ENCODE measurements at regions of chr3 and their contacts with region 1.

Region 1: DNA sequence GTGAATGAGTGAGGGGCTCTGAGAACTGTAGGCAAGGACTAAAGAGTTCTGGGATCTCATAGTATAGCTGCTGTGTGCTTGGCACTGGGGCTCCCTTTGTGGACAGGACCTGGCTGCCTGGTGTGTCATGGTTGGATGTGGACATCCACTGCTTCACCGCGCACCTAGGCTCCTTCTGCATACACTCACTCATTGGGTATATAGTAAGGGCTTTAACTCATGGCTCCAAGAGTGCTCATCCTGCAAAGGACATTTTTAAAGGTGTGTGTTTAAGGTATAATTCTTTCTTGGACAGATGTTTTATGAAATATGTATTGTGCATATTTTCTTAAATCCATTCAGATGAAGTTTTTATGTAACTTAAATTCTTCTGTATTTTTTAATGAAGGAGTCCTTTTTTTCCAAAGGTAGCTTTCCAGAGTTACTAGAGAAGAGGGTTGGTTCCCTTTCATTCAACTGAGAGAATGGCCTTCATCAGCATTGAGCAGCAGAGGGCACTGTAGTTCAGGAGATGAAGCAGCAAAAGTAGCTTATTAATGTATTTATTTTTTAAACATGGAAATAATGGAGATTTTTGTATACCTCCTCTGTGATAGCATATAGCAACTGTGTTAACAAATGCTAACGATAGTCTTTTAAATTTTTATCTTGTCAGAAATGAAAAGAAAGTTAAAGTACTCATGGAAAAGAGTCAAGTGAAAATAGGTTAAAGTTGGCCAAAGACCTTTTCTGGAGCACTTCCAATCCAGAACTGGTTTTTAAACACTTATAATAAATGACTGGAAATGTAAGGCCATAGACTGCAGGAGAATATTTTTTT is 25.2 kb downstream of the OXNAD1 start:
- DNase-seq: peak in 8 of 10 donors; percentile 54 to 74 (median 61)
- ATAC-seq: peak in 1 of 2 donors; percentile 11
- H3K4me3 Mint-ChIP-seq: peak overlapping the region; percentile 95 to 100 (median 97)
- H3K27ac Mint-ChIP-seq: peak overlapping the region; percentile 93 to 99 (median 96)
- H3K4me1 Mint-ChIP-seq: peaks cover 29 to 88% (median 59%) of the 10 kb centered on the region in 4 donors
- H3K27me3 Mint-ChIP-seq: no peaks in the 10 kb centered on the region

Region 2: DNA sequence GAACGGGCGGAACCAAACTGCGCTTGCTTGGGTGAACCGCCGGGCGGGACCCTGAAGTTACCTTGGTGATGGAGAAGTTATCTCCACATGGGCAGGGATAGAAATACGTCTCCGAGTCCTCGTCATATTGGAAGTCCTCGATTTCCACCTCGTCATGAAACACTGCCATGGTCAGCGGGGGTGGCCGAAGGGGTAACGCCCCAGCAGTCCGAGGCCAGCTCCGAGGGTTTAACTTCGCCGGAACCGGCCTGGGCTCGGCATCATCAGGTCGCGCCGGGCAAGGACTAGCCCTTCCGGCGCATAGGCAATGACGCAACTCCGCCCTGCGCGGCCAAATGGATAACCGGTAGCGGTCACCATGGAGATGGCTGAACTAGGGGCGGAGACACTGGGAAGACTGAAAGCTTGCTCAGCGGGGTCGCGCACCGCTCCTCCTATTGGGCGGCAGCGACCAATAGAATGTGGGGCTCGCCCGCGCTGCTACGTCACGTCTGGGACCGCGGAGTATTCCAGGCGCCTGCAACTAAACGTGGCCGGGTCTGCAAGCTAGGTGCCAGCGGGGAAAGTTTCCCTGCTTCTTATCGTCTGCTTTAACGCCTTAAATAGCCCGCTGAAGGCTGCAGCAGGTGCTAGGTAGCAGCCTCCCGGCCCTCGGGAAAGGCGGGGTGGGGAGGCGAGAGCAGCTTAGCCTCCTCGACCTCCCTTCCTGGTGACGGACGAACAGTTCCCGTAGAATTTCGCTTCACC is 25.3 kb before region 1 on chr3 and contains the starts of genes DPH3 and OXNAD1:
- POLR2A ChIA-PET with region 1: interaction called, 20 read pairs
- DNase-seq: peak; percentile 95 to 100 (median 99)
- ATAC-seq: peak; percentile 93
- H3K4me3 Mint-ChIP-seq: peak within 1 kb of the TSS; percentile 90 to 100 (median 100)
- H3K27ac Mint-ChIP-seq: peak within 1 kb of the TSS; percentile 96 to 100 (median 99)
- H3K4me1 Mint-ChIP-seq: peaks cover 16 to 38% (median 30%) of the 10 kb centered on the region in 4 donors
- H3K27me3 Mint-ChIP-seq: peaks cover 0 to 3% (median 0%) of the 10 kb centered on the region in 5 donors
- polyA plus RNA-seq, gene DPH3: 16.7 to 20.9 (median 18.6) TPM
- polyA plus RNA-seq, gene OXNAD1: 106 to 190 (median 168) TPM

Region 3: DNA sequence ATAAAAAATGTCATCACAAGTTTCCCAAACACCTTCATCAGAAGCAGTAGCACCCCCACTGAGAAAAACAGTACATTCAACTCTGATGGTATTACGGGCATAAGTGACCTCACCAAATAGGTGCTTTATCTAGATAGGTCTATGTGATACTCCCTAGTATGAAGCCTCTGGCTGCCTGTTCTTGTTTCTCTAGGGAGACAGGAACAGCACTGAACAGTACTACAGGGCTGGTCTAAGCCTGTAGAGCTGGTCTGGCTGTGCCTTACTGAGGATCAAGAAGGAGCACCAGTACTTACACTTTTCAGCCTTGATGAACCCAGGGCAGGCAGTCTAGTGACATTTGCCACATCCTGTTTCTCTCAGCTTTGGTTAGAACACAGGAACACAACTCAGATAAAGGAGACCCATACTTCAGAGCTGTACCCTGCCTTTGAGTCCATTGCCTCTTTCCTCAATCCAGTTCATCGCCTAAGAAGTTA is 10.7 kb after region 1 on chr3:
- POLR2A ChIA-PET with region 1: interaction called, 186 read pairs
- DNase-seq: peak in 9 of 10 donors; percentile 49 to 87 (median 75)
- ATAC-seq: peak; percentile 68 to 82
- H3K4me3 Mint-ChIP-seq: peak overlapping the region; percentile 84 to 100 (median 93)
- H3K27ac Mint-ChIP-seq: peak overlapping the region; percentile 86 to 99 (median 96)
- H3K4me1 Mint-ChIP-seq: peaks cover 52 to 99% (median 96%) of the 10 kb centered on the region in 4 donors
- H3K27me3 Mint-ChIP-seq: no peaks in the 10 kb centered on the region

Region 4: GRCh38 chr3:16309558-16309957 is 19.3 kb after region 1 on chr3:
- POLR2A ChIA-PET with region 1: interaction called, 304 read pairs
- DNase-seq: peak in 7 of 10 donors; percentile 52 to 78 (median 66)
- ATAC-seq: peak; percentile 68 to 72
- H3K4me3 Mint-ChIP-seq: peak overlapping the region; percentile 51 to 100 (median 76)
- H3K27ac Mint-ChIP-seq: peak overlapping the region; percentile 23 to 99 (median 91)
- H3K4me1 Mint-ChIP-seq: peaks cover 44 to 91% (median 87%) of the 10 kb centered on the region in 4 donors
- H3K27me3 Mint-ChIP-seq: no peaks in the 10 kb centered on the region

Region 5: GRCh38 chr3:16319307-16319706 is 29.1 kb after region 1 on chr3:
- POLR2A ChIA-PET with region 1: interaction called, 304 read pairs
- DNase-seq: peak; percentile 50 to 89 (median 72)
- ATAC-seq: peak; percentile 69 to 84
- H3K4me3 Mint-ChIP-seq: peak overlapping the region; percentile 13 to 81 (median 56)
- H3K27ac Mint-ChIP-seq: peak overlapping the region; percentile 92 to 99 (median 98)
- H3K4me1 Mint-ChIP-seq: peaks cover 36 to 97% (median 81%) of the 10 kb centered on the region in 4 donors
- H3K27me3 Mint-ChIP-seq: no peaks in the 10 kb centered on the region

Region 6: DNA sequence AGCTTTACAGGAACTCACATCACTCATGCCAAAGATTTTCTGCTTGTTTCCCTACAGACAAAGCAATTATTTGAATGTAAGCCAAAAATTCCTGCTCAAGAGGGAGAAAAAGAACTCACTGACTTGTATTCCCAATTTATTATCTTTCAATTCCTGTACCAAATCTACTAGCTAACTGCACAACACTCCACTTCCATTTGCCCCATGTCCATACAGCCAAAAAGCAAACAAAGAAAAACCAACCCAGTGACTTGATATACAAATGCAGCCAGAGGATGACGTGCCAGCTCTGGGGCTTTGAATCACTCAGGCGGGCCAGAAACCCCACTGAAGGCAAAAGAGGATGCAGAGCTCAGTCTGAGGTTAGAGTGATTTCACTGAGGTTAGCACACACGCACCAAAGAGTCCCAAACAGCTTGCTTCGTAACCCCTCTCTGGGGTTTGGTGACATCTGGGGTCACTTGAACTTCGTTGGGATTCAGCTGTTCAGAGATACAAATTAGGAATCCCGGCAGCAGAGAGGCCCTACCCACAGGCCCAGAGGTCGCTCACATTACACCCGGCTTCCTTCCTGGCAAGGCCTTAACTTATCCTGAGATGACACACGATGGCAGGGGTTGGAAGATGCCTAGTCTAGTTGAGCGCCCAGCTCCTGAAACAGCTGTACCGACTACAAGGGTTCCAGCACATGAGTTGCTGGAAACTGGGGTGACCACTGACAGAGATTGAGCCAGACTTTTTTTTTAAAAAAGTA is 221.6 kb after region 1 on chr3:
- POLR2A ChIA-PET with region 1: interaction called, 23 read pairs
- DNase-seq: peak; percentile 44 to 93 (median 84)
- ATAC-seq: peak; percentile 74 to 84
- H3K4me3 Mint-ChIP-seq: peak overlapping the region; percentile 92 to 97 (median 96)
- H3K27ac Mint-ChIP-seq: peak overlapping the region; percentile 89 to 99 (median 99)
- H3K4me1 Mint-ChIP-seq: peaks cover 45 to 88% (median 84%) of the 10 kb centered on the region in 4 donors
- H3K27me3 Mint-ChIP-seq: no peaks in the 10 kb centered on the region

Measured in naive thymus-derived CD8-positive, alpha-beta T cell (primary cell).